ENCODE measurements at regions of chr6 and their contacts with region 1.

Region 1: DNA sequence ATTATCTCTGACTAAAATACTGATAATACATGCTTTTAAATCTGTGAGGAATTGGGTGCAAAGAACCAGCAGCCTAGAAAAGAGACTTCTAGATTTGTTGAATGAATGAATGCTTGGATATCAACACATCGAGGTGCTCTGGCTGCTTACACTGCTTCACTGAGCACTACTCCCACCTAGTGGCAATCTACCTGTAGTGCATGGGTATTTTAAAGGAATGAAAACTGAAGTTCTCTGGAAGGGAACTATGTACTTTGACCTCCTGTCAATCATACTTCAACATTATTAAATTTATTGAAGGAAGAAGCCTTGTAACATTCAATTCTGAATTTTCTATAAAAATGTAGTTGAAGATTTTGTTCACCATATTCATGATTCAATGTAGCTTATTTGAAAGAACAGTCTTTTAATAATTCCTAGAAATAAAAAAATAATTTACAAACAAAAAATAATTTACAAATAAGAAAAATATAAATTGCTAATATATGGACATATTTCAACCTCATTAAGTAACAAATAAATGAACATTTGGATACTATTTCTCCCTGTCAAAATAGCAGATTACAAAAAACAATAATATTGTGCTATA is 111.2 kb upstream of the MMS22L start:
- DNase-seq: peak; percentile 34
- H3K4me3 Mint-ChIP-seq: no peak overlapping the region
- H3K27ac Mint-ChIP-seq: no peak overlapping the region
- H3K4me1 Mint-ChIP-seq: no peaks in the 10 kb centered on the region
- H3K27me3 Mint-ChIP-seq: peaks cover 9% of the 10 kb centered on the region

Region 2: DNA sequence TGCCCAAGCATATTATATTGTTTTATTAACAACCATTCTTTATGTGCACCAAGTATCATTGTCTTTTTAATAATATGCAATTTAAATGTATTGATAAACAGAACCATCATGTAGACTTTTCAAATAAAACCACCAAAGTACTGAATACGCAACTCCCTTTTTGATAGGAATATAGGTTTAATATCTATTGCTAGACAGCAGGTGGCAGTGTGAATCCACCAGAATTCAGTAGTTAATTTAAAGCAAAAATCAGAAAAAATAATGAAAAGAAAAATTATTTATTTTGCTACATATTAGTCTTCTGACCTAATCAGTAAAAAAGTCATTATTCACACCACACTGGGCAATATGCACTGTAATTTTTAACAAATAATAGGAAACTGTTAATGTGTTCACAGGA is 326.0 kb before region 1 on chr6:
- CTCF ChIA-PET with region 1: interaction called, 4 read pairs
- POLR2A ChIA-PET with region 1: no interaction called
- intact Hi-C with region 1: loop called (anchors 1 kb)
- DNase-seq: no peak
- H3K4me3 Mint-ChIP-seq: no peak overlapping the region
- H3K27ac Mint-ChIP-seq: no peak overlapping the region
- H3K4me1 Mint-ChIP-seq: no peaks in the 10 kb centered on the region
- H3K27me3 Mint-ChIP-seq: no peaks in the 10 kb centered on the region

Region 3: DNA sequence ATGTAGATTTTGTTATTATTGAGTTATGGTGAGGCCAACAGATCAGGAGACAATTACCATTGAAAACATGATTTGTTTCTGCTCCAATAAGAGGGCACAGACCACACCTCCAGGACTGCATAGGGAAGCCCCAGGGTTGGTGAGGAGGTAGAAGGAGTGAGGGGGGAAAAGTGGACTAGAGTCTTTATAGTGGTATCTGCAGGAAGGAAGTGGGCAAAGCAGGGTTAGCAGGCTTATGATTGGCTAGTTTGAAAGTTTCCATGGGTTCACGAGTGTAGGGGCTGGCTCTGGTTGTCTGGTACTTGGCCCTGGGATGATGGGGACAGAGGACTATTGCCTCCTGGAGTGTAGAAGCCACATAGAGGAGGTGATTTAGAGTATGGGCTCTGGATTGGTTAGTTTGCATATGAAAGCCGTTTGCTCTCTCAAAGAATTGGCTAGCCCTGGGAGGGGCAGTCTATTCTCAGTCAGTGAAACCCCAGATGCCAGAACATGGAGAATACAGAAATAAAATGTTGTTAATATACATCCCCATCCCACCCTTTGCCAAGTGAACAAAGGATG is 313.2 kb before region 1 on chr6:
- CTCF ChIA-PET with region 1: no interaction called
- POLR2A ChIA-PET with region 1: no interaction called
- intact Hi-C with region 1: no loop called
- DNase-seq: no peak
- H3K4me3 Mint-ChIP-seq: no peak overlapping the region
- H3K27ac Mint-ChIP-seq: no peak overlapping the region
- H3K4me1 Mint-ChIP-seq: peaks cover 6% of the 10 kb centered on the region
- H3K27me3 Mint-ChIP-seq: no peaks in the 10 kb centered on the region

Region 4: DNA sequence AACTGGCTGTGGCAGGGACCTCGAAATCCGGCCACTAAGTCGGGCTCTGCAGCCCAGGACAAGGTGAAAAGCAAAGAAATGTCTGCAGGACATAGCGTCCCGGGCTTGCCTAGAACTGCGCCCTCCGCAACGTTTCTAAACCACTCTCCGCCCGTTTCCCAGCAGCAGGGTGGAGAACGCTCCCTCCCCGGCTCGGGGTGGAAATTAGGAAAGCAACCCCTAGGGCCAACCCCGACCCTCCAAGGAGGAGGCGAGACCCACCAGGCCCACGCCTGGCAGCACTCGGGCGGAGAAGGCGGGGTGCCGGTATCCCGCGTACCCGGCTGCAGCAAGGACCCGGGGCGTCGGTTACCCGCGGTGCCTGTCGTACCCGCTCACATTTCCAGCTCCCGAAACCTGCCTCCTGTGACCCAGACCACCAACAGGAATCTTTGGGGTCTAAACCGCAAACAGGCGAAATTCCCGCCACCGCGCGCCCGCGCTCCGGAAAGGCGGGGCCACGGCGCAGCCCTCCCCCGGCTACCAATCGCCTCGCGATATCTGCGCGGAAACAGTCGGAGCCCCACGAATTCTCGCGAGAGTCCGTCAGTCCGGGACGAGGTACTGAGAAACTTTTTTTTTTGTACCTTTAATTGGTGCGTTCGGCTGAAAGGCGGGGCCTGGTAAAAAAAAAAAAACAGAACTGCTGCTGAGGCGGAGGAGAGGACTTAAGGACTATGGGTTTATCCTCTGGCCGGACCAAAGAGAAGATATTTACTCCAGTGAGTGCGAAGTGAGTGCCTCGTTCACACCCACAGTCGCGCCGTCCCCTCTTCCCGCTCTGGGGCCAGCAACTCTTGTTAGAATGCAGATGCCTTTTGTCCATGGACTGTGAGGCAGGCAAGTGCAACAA is 111.3 kb before region 1 on chr6 and contains the start of gene MMS22L:
- CTCF ChIA-PET with region 1: no interaction called
- POLR2A ChIA-PET with region 1: no interaction called
- intact Hi-C with region 1: loop called (anchors 5 kb)
- DNase-seq: peak; percentile 95
- H3K4me3 Mint-ChIP-seq: peak within 1 kb of the TSS; percentile 91
- H3K27ac Mint-ChIP-seq: peak within 1 kb of the TSS; percentile 69
- H3K4me1 Mint-ChIP-seq: peaks cover 24% of the 10 kb centered on the region
- H3K27me3 Mint-ChIP-seq: no peaks in the 10 kb centered on the region
- total RNA-seq, gene MMS22L: 38.5 to 43.3 TPM

Measured in activated CD4-positive, alpha-beta memory T cell treated with anti-CD3 and anti-CD28 coated beads for 36 hours (primary cell).